Breast epithelium (tissue), 4 donors: ENCODE measurements at regions of chr11 and their contacts with region 1.

Region 1: GRCh38 chr11:39255648-39256047 is 2203.8 kb downstream of the LRRC4C start:
- DNase-seq: no peak
- H3K4me3 ChIP-seq: no peak overlapping the region
- H3K27ac ChIP-seq: no peak overlapping the region
- H3K4me1 ChIP-seq: no peaks in the 10 kb centered on the region
- H3K27me3 ChIP-seq: no peaks in the 10 kb centered on the region
- CTCF ChIP-seq: no peak
- POLR2A ChIP-seq: no peak

Region 2: DNA sequence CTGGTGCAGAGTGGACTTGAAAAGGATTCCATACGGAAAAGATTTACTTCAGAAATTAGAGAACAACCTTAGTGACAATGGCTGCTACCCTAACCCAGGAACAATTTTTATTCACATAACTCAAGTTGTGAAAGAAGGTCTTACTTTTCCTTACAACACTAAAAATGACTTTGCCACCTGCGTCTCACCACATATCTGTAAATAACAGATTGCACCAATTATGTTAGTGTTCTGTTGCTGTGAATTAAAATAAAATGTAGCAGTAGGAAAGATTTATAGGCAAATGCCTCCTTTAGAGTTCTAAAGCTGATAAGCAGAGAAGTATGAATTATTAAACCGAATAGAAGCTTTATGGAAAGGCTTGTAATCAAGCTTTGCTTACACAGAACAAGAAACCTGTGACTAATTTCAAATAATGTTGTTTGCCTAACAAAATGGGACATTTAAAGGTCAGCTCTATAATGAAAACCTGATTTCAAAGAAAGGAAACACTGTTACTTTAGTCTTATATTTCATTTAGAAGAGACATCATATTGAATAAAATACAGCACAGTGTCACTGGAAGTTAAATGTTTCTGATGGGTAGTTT is 34.0 kb before region 1 on chr11:
- intact Hi-C with region 1: loop called (anchors 2 kb)
- DNase-seq: no peak
- H3K4me3 ChIP-seq: no peak overlapping the region
- H3K27ac ChIP-seq: no peak overlapping the region
- H3K4me1 ChIP-seq: no peaks in the 10 kb centered on the region
- H3K27me3 ChIP-seq: no peaks in the 10 kb centered on the region
- CTCF ChIP-seq: no peak
- POLR2A ChIP-seq: no peak